CD8-positive, alpha-beta T cell (primary cell): ENCODE measurements at regions of chr19 and their contacts with region 1.

Region 1: GRCh38 chr19:34269968-34270621 is 15.7 kb downstream of the GARRE1 start:
- DNase-seq: peak; percentile 42 to 91 (median 72)
- ATAC-seq: peak; percentile 92
- H3K4me3 ChIP-seq: peak overlapping the region; percentile 4 to 5
- H3K4me3 Mint-ChIP-seq: peak overlapping the region; percentile 55
- H3K27ac ChIP-seq: peak overlapping the region; percentile 57 to 82
- H3K27ac Mint-ChIP-seq: peak overlapping the region; percentile 97
- H3K4me1 ChIP-seq: peaks cover 69% of the 10 kb centered on the region
- H3K4me1 Mint-ChIP-seq: peaks cover 80% of the 10 kb centered on the region
- H3K27me3 ChIP-seq: no peaks in the 10 kb centered on the region
- H3K27me3 Mint-ChIP-seq: no peaks in the 10 kb centered on the region
- CTCF ChIP-seq: no peak

Region 2: GRCh38 chr19:34308381-34309367 is 38.6 kb after region 1 on chr19:
- CTCF ChIA-PET with region 1: interaction called, 4 read pairs
- POLR2A ChIA-PET with region 1: interaction called, 3 read pairs
- intact Hi-C with region 1: loop called (anchors 5 kb)
- DNase-seq: peak in 5 of 9 experiments; percentile 7 to 83 (median 49)
- ATAC-seq: peak; percentile 85
- H3K4me3 ChIP-seq: no peak overlapping the region
- H3K4me3 Mint-ChIP-seq: peak overlapping the region; percentile 1
- H3K27ac ChIP-seq: peak overlapping the region; percentile 23 to 67
- H3K27ac Mint-ChIP-seq: peak overlapping the region; percentile 90
- H3K4me1 ChIP-seq: peaks cover 44% of the 10 kb centered on the region
- H3K4me1 Mint-ChIP-seq: peaks cover 48% of the 10 kb centered on the region
- H3K27me3 ChIP-seq: no peaks in the 10 kb centered on the region
- H3K27me3 Mint-ChIP-seq: no peaks in the 10 kb centered on the region
- CTCF ChIP-seq: no peak

Region 3: DNA sequence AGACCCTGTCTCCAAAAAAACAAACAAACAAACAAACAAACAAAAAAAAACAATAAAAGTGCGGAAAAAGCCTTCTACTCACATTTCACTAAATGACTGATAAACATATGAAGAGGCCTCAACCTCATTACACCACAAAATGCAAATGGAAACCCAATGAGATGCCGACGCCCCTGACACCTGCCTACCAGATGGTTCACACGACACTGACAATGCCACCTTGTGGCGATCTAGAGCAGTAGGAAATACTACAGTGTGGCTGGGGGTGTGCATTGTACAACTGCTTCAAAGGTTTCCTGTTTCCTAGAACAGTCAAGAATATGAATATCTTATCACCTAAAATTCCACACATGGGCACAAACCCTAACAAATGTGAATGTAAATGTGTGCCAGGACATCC is 392.8 kb after region 1 on chr19:
- CTCF ChIA-PET with region 1: no interaction called
- POLR2A ChIA-PET with region 1: no interaction called
- intact Hi-C with region 1: no loop called
- DNase-seq: peak in 7 of 9 experiments; percentile 18 to 77 (median 35)
- ATAC-seq: peak; percentile 99
- H3K4me3 ChIP-seq: no peak overlapping the region
- H3K4me3 Mint-ChIP-seq: no peak overlapping the region
- H3K27ac ChIP-seq: no peak overlapping the region
- H3K27ac Mint-ChIP-seq: no peak overlapping the region
- H3K4me1 ChIP-seq: peaks cover 19% of the 10 kb centered on the region
- H3K4me1 Mint-ChIP-seq: peaks cover 26% of the 10 kb centered on the region
- H3K27me3 ChIP-seq: no peaks in the 10 kb centered on the region
- H3K27me3 Mint-ChIP-seq: peaks cover 3% of the 10 kb centered on the region
- CTCF ChIP-seq: peak; percentile 67